Tibial artery (tissue), 4 donors: ENCODE measurements at regions of chr12 and their contacts with region 1.

Region 1: DNA sequence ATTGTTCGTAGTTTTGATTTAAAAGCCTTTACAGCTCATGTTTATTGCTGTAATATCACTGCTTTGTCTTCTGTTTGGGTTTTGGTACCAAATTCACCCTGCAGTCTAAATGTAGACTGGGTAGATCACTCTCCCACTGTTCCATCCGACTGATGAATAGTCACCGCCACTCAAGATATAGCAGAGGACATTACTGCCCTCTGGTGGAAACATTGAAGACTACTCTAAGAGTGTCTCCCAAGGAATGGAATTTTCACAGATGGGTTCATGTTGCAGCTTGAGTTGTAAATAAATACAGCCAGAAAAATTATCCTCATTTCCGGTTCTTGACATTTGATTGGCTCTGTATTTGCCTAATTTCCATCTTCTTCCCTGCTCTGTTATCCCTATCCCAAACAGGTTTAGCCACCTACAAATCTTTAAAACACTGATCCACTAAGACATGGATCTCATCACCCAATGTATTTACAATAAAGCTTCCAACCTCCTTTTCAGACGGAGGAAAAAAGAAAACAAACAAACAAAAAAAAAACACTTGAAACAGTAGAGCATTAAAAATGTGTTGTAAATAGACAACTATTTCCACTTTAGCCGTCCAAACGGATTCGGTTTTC is 198.3 kb upstream of the CPNE8 start:
- DNase-seq: no peak
- H3K4me3 ChIP-seq: no peak overlapping the region
- H3K27ac ChIP-seq: no peak overlapping the region
- H3K4me1 ChIP-seq: no peaks in the 10 kb centered on the region
- H3K27me3 ChIP-seq: no peaks in the 10 kb centered on the region
- CTCF ChIP-seq: peak; percentile 60 to 71

Region 2: DNA sequence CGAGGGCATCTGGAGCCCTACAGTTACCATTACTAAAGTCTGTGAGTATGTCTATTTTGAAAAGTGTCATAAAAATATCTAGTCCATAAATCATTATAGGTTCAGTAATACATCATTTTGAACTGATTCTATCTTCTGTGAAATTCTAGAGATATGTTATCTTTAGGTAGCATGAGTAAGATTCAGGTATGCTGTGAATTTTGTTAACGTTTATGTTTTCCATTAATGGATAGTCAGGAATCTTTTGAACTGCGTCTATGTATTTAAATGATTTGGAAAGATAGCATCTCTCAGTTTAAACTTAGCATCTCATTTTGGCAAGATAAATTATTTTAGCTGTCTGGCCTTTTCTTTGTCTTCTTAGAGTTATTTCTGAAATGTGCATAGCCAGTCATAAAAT is 778.8 kb before region 1 on chr12:
- intact Hi-C with region 1: loop called (anchors 5 kb)
- DNase-seq: no peak
- H3K4me3 ChIP-seq: no peak overlapping the region
- H3K27ac ChIP-seq: no peak overlapping the region
- H3K4me1 ChIP-seq: peaks cover 0 to 3% (median 0%) of the 10 kb centered on the region in 4 donors
- H3K27me3 ChIP-seq: no peaks in the 10 kb centered on the region
- CTCF ChIP-seq: no peak

Region 3: DNA sequence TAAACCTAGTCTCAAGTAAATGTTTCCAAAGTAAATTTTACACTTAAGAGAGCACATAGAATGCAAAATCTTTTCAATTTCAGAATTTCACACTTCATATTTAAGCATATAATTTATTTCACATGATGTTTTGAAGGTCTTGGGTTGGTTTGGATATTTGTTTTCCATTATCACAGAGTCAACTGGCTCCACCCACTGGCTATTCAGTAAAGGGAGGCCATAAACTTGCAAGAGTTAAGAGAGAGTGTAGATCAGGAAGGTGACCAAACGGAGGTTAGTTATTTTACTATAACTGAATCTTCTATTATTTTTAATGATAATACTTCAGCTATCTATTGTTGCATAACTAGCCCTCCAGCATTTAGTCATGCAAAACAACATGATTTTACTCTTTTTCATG is 192.0 kb before region 1 on chr12:
- intact Hi-C with region 1: loop called (anchors 5 kb)
- DNase-seq: no peak
- H3K4me3 ChIP-seq: no peak overlapping the region
- H3K27ac ChIP-seq: no peak overlapping the region
- H3K4me1 ChIP-seq: peaks cover 0 to 5% (median 0%) of the 10 kb centered on the region in 4 donors
- H3K27me3 ChIP-seq: no peaks in the 10 kb centered on the region
- CTCF ChIP-seq: no peak

Region 4: GRCh38 chr12:39012870-39013269 is 90.8 kb before region 1 on chr12:
- intact Hi-C with region 1: no loop called
- DNase-seq: no peak
- H3K4me3 ChIP-seq: no peak overlapping the region
- H3K27ac ChIP-seq: no peak overlapping the region
- H3K4me1 ChIP-seq: no peaks in the 10 kb centered on the region
- H3K27me3 ChIP-seq: no peaks in the 10 kb centered on the region
- CTCF ChIP-seq: no peak